Naive thymus-derived CD8-positive, alpha-beta T cell (primary cell): ENCODE measurements at regions of chr12 and their contacts with region 1.

Region 1: DNA sequence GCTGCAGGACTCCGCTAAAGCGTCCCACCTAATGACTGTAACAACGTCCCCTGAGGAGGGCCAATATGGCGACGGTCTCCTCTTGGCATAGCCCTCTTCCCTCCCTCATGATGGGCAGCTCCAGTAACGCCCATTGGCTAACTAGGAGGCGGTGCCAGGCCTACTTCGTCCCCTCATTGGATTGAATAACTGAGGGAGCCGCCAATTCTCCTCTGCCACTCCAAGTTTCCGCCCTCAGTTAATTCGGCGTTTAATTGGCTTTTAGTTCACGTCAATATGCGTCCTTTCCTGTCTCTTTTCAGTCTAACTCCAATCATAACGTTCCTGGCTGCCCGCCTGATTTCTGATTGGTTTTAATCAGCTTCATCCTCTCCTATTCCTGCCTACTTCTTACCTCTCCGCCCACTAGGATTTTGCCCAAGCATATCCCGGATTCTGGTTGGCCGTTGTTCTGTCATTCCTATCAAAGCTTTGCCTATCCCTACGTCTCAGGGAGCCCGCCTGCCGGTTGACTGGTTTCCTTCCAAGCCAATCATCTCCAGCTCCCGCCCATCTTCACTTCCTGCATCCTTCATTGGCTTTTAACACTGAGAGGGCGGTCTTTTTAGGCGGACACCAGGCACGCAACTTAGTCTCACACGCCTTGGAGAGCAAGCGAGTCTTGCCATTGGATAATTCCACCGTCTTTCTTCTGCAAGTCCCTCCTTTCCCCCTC is 430 bp upstream of the SP1 start:
- DNase-seq: peak; percentile 68 to 100 (median 99)
- ATAC-seq: peak; percentile 78 to 81
- H3K4me3 Mint-ChIP-seq: no peak overlapping the region
- H3K27ac Mint-ChIP-seq: no peak overlapping the region
- H3K4me1 Mint-ChIP-seq: peaks cover 20 to 41% (median 38%) of the 10 kb centered on the region in 4 donors
- H3K27me3 Mint-ChIP-seq: no peaks in the 10 kb centered on the region

Region 2: DNA sequence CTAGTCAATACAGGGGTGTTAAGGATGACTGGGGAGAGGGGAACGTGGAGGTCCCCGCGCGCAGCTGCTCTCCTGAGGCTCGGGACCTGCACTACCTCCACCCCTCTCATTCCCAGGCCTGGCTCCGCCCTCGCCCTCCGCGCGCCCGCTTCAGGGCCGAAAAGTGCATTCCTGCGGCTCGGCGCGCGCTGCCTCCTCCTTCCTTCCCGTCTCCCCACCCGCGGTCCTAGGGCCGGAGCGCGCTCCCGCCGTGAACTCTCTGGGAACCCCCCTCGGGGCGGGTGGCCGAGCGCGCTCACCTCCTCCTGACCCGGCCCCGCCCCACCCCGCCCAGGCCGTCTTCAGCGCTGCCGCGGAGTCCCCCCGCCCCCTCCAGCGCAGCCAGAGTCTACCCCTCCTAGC is 158.7 kb before region 1 on chr12:
- POLR2A ChIA-PET with region 1: interaction called, 11 read pairs
- DNase-seq: peak; percentile 57 to 85 (median 68)
- ATAC-seq: peak; percentile 59 to 63
- H3K4me3 Mint-ChIP-seq: peak overlapping the region; percentile 91 to 100 (median 98)
- H3K27ac Mint-ChIP-seq: peak overlapping the region; percentile 91 to 98 (median 94)
- H3K4me1 Mint-ChIP-seq: peaks cover 62 to 80% (median 77%) of the 10 kb centered on the region in 4 donors
- H3K27me3 Mint-ChIP-seq: no peaks in the 10 kb centered on the region

Region 3: DNA sequence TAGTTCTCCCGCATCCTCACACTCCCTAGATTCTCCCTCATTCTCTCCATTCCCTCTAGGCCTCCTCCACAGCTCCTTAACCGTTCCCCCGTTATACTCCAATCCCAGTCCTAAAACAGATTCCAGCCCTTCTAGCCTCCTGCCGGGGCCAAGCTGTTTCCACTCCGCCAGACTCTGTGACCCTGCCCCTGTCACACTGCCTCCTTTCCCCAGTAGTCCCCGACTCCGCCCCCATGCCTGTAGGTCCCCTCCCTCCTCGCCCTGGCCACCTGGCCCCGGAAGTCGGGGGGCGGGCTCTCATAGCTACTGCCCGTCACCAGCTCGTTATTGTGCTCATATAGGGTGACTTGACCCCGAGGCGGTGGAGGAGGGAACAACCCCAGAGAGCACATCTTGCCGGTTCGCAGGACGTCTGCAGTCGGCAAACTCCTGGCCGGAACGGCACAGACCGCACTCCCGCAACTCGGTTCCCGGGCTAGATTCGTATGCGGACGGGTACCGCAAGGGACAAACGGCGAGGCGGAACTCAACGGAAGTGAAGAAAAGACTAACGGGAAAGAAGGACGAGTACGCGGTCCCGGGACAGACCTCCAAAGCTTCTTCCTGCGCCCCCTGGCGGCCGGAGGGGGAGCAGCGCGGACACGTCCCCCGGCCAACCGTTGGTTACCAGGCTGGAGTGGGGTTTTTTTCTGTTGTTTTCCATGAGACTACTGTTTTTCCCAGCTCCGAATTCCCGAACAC is 58.3 kb before region 1 on chr12 and contains the start of gene AAAS:
- POLR2A ChIA-PET with region 1: interaction called, 24 read pairs
- DNase-seq: peak; percentile 87 to 99 (median 92)
- ATAC-seq: peak; percentile 77 to 78
- H3K4me3 Mint-ChIP-seq: peak within 1 kb of the TSS; percentile 90 to 100 (median 98)
- H3K27ac Mint-ChIP-seq: peak within 1 kb of the TSS; percentile 96 to 99 (median 97)
- H3K4me1 Mint-ChIP-seq: peaks cover 28 to 51% (median 45%) of the 10 kb centered on the region in 4 donors
- H3K27me3 Mint-ChIP-seq: no peaks in the 10 kb centered on the region
- polyA plus RNA-seq, gene AAAS: 34.1 to 57.2 (median 39.3) TPM

Region 4: GRCh38 chr12:53352331-53353256 is 27.0 kb before region 1 on chr12:
- POLR2A ChIA-PET with region 1: interaction called, 19 read pairs
- DNase-seq: peak; percentile 63 to 91 (median 82)
- ATAC-seq: peak; percentile 99 to 100
- H3K4me3 Mint-ChIP-seq: no peak overlapping the region
- H3K27ac Mint-ChIP-seq: peak overlapping the region in 3 of 10 donors; percentile 34 to 67 (median 43)
- H3K4me1 Mint-ChIP-seq: peaks cover 6 to 10% (median 8%) of the 10 kb centered on the region in 4 donors
- H3K27me3 Mint-ChIP-seq: no peaks in the 10 kb centered on the region

Region 5: GRCh38 chr12:53391729-53392128 is 12.2 kb after region 1 on chr12:
- POLR2A ChIA-PET with region 1: interaction called, 13 read pairs
- DNase-seq: no peak
- ATAC-seq: no peak
- H3K4me3 Mint-ChIP-seq: peak overlapping the region in 8 of 10 donors; percentile 11 to 65 (median 36)
- H3K27ac Mint-ChIP-seq: peak overlapping the region in 6 of 10 donors; percentile 14 to 82 (median 19)
- H3K4me1 Mint-ChIP-seq: peaks cover 17 to 55% (median 48%) of the 10 kb centered on the region in 4 donors
- H3K27me3 Mint-ChIP-seq: no peaks in the 10 kb centered on the region

Region 6: GRCh38 chr12:53441040-53441833 is 61.7 kb after region 1 on chr12 and contains the start of gene PRR13:
- POLR2A ChIA-PET with region 1: interaction called, 14 read pairs
- DNase-seq: peak; percentile 90 to 99 (median 97)
- ATAC-seq: peak; percentile 98
- H3K4me3 Mint-ChIP-seq: peak within 1 kb of the TSS; percentile 90 to 100 (median 96)
- H3K27ac Mint-ChIP-seq: peak within 1 kb of the TSS; percentile 90 to 99 (median 96)
- H3K4me1 Mint-ChIP-seq: peaks cover 17 to 48% (median 44%) of the 10 kb centered on the region in 4 donors
- H3K27me3 Mint-ChIP-seq: no peaks in the 10 kb centered on the region
- polyA plus RNA-seq, gene PRR13: 513 to 535 (median 534) TPM